ENCODE measurements at regions of chr6 and their contacts with region 1.

Region 1: GRCh38 chr6:3748208-3749066 is 3.1 kb downstream of the PXDC1 start:
- DNase-seq: peak; percentile 76
- H3K4me3 ChIP-seq: no peak overlapping the region
- H3K27ac ChIP-seq: no peak overlapping the region
- H3K4me1 ChIP-seq: peaks cover 8% of the 10 kb centered on the region
- H3K27me3 ChIP-seq: peaks cover 9% of the 10 kb centered on the region
- CTCF ChIP-seq: peak; percentile 55

Region 2: DNA sequence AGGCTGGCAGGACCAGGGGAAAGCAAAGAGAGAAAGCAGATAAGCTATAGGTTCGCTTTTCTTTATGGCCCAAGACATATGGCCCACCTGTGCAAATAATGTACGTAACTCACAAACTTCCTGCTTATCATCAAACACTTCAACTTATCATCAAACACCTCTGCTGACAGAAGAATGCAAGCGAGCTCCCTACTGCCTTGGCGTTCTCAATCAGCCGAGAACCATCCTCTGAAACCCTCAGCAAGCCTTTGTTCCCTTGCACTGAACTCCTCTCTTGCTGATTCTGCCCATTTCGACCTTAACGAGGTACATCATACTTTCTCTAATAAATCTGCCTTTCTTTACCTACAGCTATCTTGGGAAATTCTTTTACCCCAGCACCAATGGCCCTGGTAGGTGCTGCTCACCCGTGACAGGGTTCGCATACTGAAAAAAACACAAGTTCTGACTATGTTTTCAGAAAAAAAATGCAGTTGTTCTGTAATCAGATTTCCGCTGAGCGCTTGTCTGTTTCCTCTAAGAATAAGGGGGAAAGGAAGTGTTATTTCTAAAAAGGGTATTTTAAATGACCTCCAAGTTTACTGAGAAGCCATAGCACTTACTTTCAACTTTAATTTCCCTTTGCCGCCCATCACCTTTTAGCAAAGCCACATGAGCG is 805.4 kb before region 1 on chr6:
- intact Hi-C with region 1: no loop called
- DNase-seq: peak; percentile 28
- H3K4me3 ChIP-seq: no peak overlapping the region
- H3K27ac ChIP-seq: no peak overlapping the region
- H3K4me1 ChIP-seq: no peaks in the 10 kb centered on the region
- H3K27me3 ChIP-seq: no peaks in the 10 kb centered on the region
- CTCF ChIP-seq: no peak

Region 3: DNA sequence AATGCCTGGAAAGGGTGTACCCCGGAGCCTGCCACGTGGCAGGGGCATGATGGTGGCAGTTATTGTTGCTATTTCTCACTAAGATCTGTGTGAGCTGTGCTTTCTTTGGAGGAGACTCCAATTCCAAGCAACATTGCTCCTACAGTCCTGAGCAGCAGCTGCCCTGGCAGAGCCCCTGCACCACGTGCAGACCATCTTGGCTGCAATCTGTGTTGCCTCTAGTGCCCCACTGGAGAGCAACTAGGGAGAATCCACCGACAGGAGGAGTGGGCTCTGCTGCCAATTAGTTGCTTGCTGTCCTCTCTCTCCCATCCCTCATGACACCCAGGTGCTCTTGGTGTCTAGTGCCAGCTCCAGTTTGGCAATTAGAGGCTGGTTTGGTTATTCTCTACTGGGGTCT is 113.0 kb before region 1 on chr6:
- intact Hi-C with region 1: no loop called
- DNase-seq: no peak
- H3K4me3 ChIP-seq: no peak overlapping the region
- H3K27ac ChIP-seq: no peak overlapping the region
- H3K4me1 ChIP-seq: no peaks in the 10 kb centered on the region
- H3K27me3 ChIP-seq: no peaks in the 10 kb centered on the region
- CTCF ChIP-seq: no peak

Region 4: GRCh38 chr6:3919130-3919628 is 170.7 kb after region 1 on chr6:
- intact Hi-C with region 1: no loop called
- DNase-seq: no peak
- H3K4me3 ChIP-seq: no peak overlapping the region
- H3K27ac ChIP-seq: no peak overlapping the region
- H3K4me1 ChIP-seq: no peaks in the 10 kb centered on the region
- H3K27me3 ChIP-seq: no peaks in the 10 kb centered on the region
- CTCF ChIP-seq: no peak

Region 5: GRCh38 chr6:3929281-3929798 is 180.9 kb after region 1 on chr6:
- intact Hi-C with region 1: loop called (anchors 2 kb)
- DNase-seq: no peak
- H3K4me3 ChIP-seq: no peak overlapping the region
- H3K27ac ChIP-seq: no peak overlapping the region
- H3K4me1 ChIP-seq: no peaks in the 10 kb centered on the region
- H3K27me3 ChIP-seq: no peaks in the 10 kb centered on the region
- CTCF ChIP-seq: no peak

Region 6: GRCh38 chr6:3990692-3991501 is 242.5 kb after region 1 on chr6:
- intact Hi-C with region 1: loop called (anchors 5 kb)
- DNase-seq: peak; percentile 89
- H3K4me3 ChIP-seq: peak overlapping the region; percentile 21
- H3K27ac ChIP-seq: no peak overlapping the region
- H3K4me1 ChIP-seq: peaks cover 3% of the 10 kb centered on the region
- H3K27me3 ChIP-seq: no peaks in the 10 kb centered on the region
- CTCF ChIP-seq: peak; percentile 78

Measured in colonic mucosa (tissue), 4 donors.